Vagina (tissue), 2 donors: ENCODE measurements at regions of chr15 and their contacts with region 1.

Region 1: DNA sequence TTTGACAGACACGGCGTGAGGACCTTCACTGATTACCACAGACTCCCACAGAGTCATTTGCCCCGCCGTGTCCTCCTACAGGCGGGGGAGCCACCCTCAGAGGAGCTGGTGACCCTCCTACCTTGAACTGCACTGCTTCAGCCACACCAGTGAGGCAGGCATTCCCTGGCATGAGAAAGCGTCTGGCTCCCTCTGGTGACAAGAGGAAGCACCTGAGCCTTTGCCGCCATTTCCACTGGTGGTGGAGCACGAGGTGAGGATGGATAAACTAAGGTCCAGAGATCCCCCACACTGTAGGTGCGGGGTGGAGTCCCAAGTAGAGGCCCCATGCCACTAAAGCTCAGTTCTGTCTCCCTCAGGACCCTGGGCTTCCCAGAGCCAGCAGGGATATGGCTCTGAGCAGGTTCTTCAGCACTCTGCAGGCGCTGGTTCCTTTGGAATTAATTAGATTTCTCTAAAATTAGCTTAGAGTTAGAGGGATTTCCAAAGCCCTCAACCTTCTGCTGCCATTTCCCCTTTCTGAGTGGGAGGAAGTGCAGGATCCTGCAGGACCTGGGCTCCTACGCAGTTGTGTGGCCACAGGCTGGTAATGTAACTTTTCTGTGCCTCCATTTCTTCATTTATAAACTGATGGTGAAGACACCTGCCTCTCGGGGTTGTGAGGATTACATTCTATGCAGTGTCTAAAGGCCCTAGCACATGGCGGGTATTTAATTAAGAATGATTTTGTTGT is 224.0 kb downstream of the SLCO3A1 start:
- DNase-seq: no peak
- H3K4me3 ChIP-seq: no peak overlapping the region
- H3K27ac ChIP-seq: no peak overlapping the region
- H3K4me1 ChIP-seq: peaks cover 50% of the 10 kb centered on the region
- H3K27me3 ChIP-seq: no peaks in the 10 kb centered on the region
- CTCF ChIP-seq: peak; percentile 35 to 79 (median 68)
- POLR2A ChIP-seq: no peak

Region 2: DNA sequence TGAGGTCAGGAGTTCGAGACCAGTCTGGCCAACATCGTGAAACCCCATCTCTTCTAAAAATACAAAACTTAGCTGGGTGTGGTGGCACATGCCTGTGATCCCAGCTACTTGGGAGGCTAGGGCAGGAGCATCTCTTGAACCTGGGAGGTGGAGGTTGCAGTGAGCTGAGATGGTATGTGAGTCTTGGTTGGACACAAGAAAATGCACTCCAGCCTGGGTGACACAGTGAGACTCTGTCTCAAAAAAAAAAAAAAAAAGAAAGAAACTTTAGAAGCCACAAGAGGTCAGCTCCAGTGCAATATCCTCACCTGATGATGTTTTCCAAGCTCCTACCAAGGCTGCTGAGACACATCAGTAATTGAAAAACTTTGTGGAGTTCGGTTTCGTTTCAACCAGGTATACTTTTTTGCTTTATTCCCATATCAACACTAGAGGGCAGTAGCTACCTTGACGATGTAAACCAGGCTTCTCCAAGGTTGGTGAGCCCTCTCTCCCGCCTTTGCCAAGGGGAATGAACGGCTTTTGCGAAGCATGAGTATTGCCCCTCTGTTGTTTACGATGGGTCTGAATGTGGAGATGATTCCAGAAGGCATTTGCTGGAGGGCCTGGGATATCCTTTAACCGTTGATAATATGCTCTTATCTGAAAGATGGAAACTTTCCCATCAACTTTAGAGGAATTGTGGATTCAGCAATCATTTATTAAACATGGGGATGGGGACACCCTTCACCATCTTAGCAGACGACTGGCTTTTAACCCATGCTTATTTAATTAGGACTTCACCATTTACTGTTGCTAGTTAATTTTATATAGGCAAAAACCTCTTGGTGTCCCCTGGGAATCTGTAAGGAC is 774.7 kb before region 1 on chr15:
- intact Hi-C with region 1: loop called (anchors 5 kb)
- DNase-seq: no peak
- H3K4me3 ChIP-seq: no peak overlapping the region
- H3K27ac ChIP-seq: no peak overlapping the region
- H3K4me1 ChIP-seq: no peaks in the 10 kb centered on the region
- H3K27me3 ChIP-seq: no peaks in the 10 kb centered on the region
- CTCF ChIP-seq: peak; percentile 45 to 73 (median 48)
- POLR2A ChIP-seq: no peak

Region 3: GRCh38 chr15:91706322-91707032 is 371.0 kb before region 1 on chr15:
- intact Hi-C with region 1: loop called (anchors 10 kb)
- DNase-seq: peak in 1 of 2 donors; percentile 93
- H3K4me3 ChIP-seq: no peak overlapping the region
- H3K27ac ChIP-seq: no peak overlapping the region
- H3K4me1 ChIP-seq: no peaks in the 10 kb centered on the region
- H3K27me3 ChIP-seq: no peaks in the 10 kb centered on the region
- CTCF ChIP-seq: peak; percentile 71 to 91 (median 81)
- POLR2A ChIP-seq: no peak

Region 4: GRCh38 chr15:91849749-91850161 is 227.8 kb before region 1 on chr15:
- intact Hi-C with region 1: loop called (anchors 5 kb)
- DNase-seq: no peak
- H3K4me3 ChIP-seq: no peak overlapping the region
- H3K27ac ChIP-seq: no peak overlapping the region
- H3K4me1 ChIP-seq: peaks cover 19% of the 10 kb centered on the region
- H3K27me3 ChIP-seq: no peaks in the 10 kb centered on the region
- CTCF ChIP-seq: peak; percentile 9 to 44 (median 34)
- POLR2A ChIP-seq: no peak

Region 5: GRCh38 chr15:91942676-91943576 is 134.6 kb before region 1 on chr15:
- intact Hi-C with region 1: loop called (anchors 10 kb)
- DNase-seq: peak in 1 of 2 donors; percentile 96
- H3K4me3 ChIP-seq: peak overlapping the region; percentile 1 to 22
- H3K27ac ChIP-seq: peak overlapping the region; percentile 72
- H3K4me1 ChIP-seq: peaks cover 93% of the 10 kb centered on the region
- H3K27me3 ChIP-seq: no peaks in the 10 kb centered on the region
- CTCF ChIP-seq: no peak
- POLR2A ChIP-seq: no peak

Region 6: GRCh38 chr15:92244703-92245102 is 167.2 kb after region 1 on chr15:
- intact Hi-C with region 1: no loop called
- DNase-seq: no peak
- H3K4me3 ChIP-seq: no peak overlapping the region
- H3K27ac ChIP-seq: no peak overlapping the region
- H3K4me1 ChIP-seq: no peaks in the 10 kb centered on the region
- H3K27me3 ChIP-seq: no peaks in the 10 kb centered on the region
- CTCF ChIP-seq: no peak
- POLR2A ChIP-seq: no peak